Endothelial cell of umbilical vein (primary cell): ENCODE measurements at regions of chr2 and their contacts with region 1.

Region 1: GRCh38 chr2:109351164-109351756 is 222.3 kb downstream of the SH3RF3 start:
- DNase-seq: peak; percentile 69
- H3K4me3 ChIP-seq: no peak overlapping the region
- H3K27ac ChIP-seq: no peak overlapping the region
- H3K4me1 ChIP-seq: peaks cover 38% of the 10 kb centered on the region
- H3K27me3 ChIP-seq: no peaks in the 10 kb centered on the region
- CTCF ChIP-seq: no peak
- POLR2A ChIP-seq: no peak

Region 2: DNA sequence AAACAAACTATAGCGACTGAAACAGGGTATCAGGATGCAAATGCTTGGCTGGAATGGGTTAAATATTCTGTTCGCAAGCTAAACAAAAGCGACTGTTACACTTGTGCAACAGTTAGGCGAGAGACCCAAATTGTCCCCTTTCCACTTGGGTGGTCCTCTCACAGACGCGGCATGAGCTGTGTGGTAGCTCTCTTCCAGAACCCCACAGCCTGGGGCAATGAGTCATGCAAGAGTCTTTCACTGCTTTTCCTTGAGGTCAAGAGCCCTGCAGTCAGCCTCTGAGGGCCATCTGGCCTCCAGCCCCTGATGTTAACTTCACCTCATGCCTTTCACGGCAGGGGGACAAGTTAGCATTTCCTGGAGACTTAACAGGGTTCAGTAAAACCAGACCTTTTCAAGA is 947.8 kb before region 1 on chr2:
- CTCF ChIA-PET with region 1: no interaction called
- POLR2A ChIA-PET with region 1: no interaction called
- dilution Hi-C with region 1: no loop called
- intact Hi-C with region 1: no loop called
- DNase-seq: no peak
- H3K4me3 ChIP-seq: no peak overlapping the region
- H3K27ac ChIP-seq: no peak overlapping the region
- H3K4me1 ChIP-seq: no peaks in the 10 kb centered on the region
- H3K27me3 ChIP-seq: peaks cover 0 to 7% of the 10 kb centered on the region in 2 experiments
- CTCF ChIP-seq: no peak
- POLR2A ChIP-seq: no peak

Region 3: GRCh38 chr2:108927936-108928659 is 423.2 kb before region 1 on chr2:
- CTCF ChIA-PET with region 1: no interaction called
- POLR2A ChIA-PET with region 1: no interaction called
- dilution Hi-C with region 1: no loop called
- intact Hi-C with region 1: no loop called
- DNase-seq: peak; percentile 51
- H3K4me3 ChIP-seq: no peak overlapping the region
- H3K27ac ChIP-seq: no peak overlapping the region
- H3K4me1 ChIP-seq: no peaks in the 10 kb centered on the region
- H3K27me3 ChIP-seq: no peaks in the 10 kb centered on the region
- CTCF ChIP-seq: peak; percentile 71 to 73
- POLR2A ChIP-seq: no peak

Region 4: GRCh38 chr2:109322111-109322510 is 29.1 kb before region 1 on chr2:
- CTCF ChIA-PET with region 1: no interaction called
- POLR2A ChIA-PET with region 1: no interaction called
- dilution Hi-C with region 1: no loop called
- intact Hi-C with region 1: loop called (anchors 1 kb)
- DNase-seq: peak; percentile 87
- H3K4me3 ChIP-seq: no peak overlapping the region
- H3K27ac ChIP-seq: peak overlapping the region; percentile 55
- H3K4me1 ChIP-seq: peaks cover 38% of the 10 kb centered on the region
- H3K27me3 ChIP-seq: no peaks in the 10 kb centered on the region
- CTCF ChIP-seq: no peak
- POLR2A ChIP-seq: no peak

Region 5: DNA sequence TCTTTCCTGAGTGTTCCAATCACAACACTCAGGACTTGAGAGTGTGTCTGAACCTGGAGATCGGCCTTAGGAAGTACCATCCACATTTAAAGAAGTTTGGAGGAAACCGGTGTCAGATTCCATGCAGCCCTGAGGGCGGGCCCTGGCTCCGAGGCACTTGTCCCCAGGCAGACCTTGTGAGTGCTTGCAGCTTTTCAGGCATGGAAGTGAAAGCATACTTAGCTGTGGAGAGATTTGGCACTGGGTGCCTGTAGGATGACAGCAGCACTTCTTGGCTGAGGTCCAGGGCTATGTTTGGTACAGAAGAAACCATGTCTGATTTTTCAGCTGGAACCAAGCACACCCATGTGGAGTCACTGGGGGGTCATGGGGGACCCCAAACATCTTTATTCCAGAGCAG is 31.7 kb after region 1 on chr2:
- CTCF ChIA-PET with region 1: no interaction called
- POLR2A ChIA-PET with region 1: no interaction called
- dilution Hi-C with region 1: no loop called
- intact Hi-C with region 1: loop called (anchors 5 kb)
- DNase-seq: peak; percentile 52
- H3K4me3 ChIP-seq: no peak overlapping the region
- H3K27ac ChIP-seq: no peak overlapping the region
- H3K4me1 ChIP-seq: no peaks in the 10 kb centered on the region
- H3K27me3 ChIP-seq: no peaks in the 10 kb centered on the region
- CTCF ChIP-seq: no peak
- POLR2A ChIP-seq: no peak